IMR-90 (cell line): ENCODE measurements at regions of chr10 and their contacts with region 1.

Region 1: GRCh38 chr10:122342293-122343134 is 32.0 kb upstream of the PLEKHA1 start:
- DNase-seq: peak; percentile 51
- ATAC-seq: peak; percentile 89
- H3K4me3 ChIP-seq: no peak overlapping the region
- H3K27ac ChIP-seq: no peak overlapping the region
- H3K4me1 ChIP-seq: no peaks in the 10 kb centered on the region
- H3K27me3 ChIP-seq: peaks cover 10% of the 10 kb centered on the region; the same call in 1 of the 2 replicates
- CTCF ChIP-seq: peak; percentile 83
- POLR2A ChIP-seq: no peak
- RAD21 ChIP-seq: peak; percentile 74

Region 2: GRCh38 chr10:122221958-122222357 is 120.6 kb before region 1 on chr10:
- CTCF ChIA-PET with region 1: no interaction called
- POLR2A ChIA-PET with region 1: no interaction called
- dilution Hi-C with region 1: no loop called
- in situ Hi-C with region 1: no loop called
- intact Hi-C with region 1: no loop called
- DNase-seq: no peak
- ATAC-seq: no peak
- H3K4me3 ChIP-seq: no peak overlapping the region
- H3K27ac ChIP-seq: no peak overlapping the region
- H3K4me1 ChIP-seq: no peaks in the 10 kb centered on the region
- H3K27me3 ChIP-seq: no peaks in the 10 kb centered on the region
- CTCF ChIP-seq: no peak
- POLR2A ChIP-seq: no peak
- RAD21 ChIP-seq: no peak

Region 3: DNA sequence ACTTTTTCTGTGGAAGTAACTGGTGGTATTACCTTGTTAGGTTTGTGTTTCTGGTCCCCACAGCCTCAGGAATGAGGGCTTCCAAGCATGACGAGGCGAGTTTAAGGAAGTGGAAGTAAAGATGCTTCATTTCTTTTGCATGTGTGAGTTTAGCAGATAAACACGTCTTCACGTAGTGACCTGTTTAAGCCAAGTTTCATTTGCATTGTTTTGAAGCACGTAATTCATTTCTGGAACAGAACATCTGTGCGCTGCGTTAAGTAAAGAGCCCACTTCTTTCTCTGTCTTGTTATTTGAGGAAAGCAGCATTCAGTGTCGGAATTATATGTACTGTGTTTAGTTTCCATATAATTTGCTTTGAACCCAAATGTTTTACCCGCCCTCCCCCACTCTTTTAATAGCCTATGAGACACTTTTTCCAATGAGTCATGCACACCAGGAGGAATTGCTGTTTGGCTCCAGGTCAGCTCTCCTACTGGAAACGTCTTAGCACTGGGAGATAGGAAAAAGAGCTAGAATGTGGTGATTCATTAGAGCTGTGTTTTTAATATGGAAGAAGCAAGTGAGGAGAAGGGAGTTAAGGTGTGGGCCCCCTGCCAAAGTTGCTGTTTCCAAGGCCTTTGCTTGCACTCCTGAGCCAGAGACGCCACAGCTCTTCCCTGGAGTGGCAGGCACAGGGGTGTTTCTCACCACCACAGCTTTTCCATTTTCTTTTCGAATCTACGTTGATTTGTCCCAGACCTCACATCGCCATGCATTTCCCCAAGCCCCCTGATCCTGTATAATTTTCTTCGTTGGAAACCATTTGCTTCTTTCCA is 34.6 kb before region 1 on chr10:
- CTCF ChIA-PET with region 1: no interaction called
- POLR2A ChIA-PET with region 1: no interaction called
- dilution Hi-C with region 1: no loop called
- in situ Hi-C with region 1: no loop called
- intact Hi-C with region 1: loop called (anchors 5 kb)
- DNase-seq: peak; percentile 91
- ATAC-seq: peak; percentile 91
- H3K4me3 ChIP-seq: peak overlapping the region; percentile 28; the same call in 1 of the 2 replicates
- H3K27ac ChIP-seq: peak overlapping the region; percentile 35; the same call in 1 of the 2 replicates
- H3K4me1 ChIP-seq: peaks cover 8% of the 10 kb centered on the region
- H3K27me3 ChIP-seq: no peaks in the 10 kb centered on the region
- CTCF ChIP-seq: no peak
- POLR2A ChIP-seq: no peak
- RAD21 ChIP-seq: no peak

Region 4: GRCh38 chr10:122435212-122435827 is 92.8 kb after region 1 on chr10:
- CTCF ChIA-PET with region 1: interaction called, 16 read pairs
- POLR2A ChIA-PET with region 1: no interaction called
- dilution Hi-C with region 1: no loop called
- in situ Hi-C with region 1: loop called (anchors 5 kb)
- intact Hi-C with region 1: loop called (anchors 1 kb)
- DNase-seq: peak; percentile 55
- ATAC-seq: peak; percentile 46
- H3K4me3 ChIP-seq: no peak overlapping the region
- H3K27ac ChIP-seq: no peak overlapping the region
- H3K4me1 ChIP-seq: no peaks in the 10 kb centered on the region
- H3K27me3 ChIP-seq: no peaks in the 10 kb centered on the region
- CTCF ChIP-seq: peak; percentile 78
- POLR2A ChIP-seq: no peak
- RAD21 ChIP-seq: peak; percentile 85

Region 5: DNA sequence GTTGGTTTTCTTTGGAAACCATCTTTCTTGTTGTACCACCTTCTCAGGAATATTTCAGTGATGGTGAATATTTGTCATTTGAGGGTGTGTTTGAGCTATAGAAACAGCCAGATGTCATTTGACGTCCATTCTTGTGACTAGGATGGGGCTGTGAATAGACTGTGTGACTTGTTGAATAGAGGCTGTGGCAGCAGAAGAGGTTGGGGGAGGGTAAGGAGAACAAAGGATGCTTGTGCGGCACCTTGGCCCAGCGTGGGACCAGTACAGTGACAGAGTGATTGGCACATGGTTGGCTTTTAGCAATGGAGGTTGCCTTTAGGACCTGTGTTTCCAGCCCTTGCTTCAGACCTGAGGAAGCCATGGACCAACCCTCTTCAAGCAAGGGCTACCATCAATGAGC is 229.4 kb after region 1 on chr10:
- CTCF ChIA-PET with region 1: interaction called, 3 read pairs
- POLR2A ChIA-PET with region 1: no interaction called
- dilution Hi-C with region 1: no loop called
- in situ Hi-C with region 1: loop called (anchors 10 kb)
- intact Hi-C with region 1: no loop called
- DNase-seq: no peak
- ATAC-seq: no peak
- H3K4me3 ChIP-seq: no peak overlapping the region
- H3K27ac ChIP-seq: no peak overlapping the region
- H3K4me1 ChIP-seq: no peaks in the 10 kb centered on the region
- H3K27me3 ChIP-seq: no peaks in the 10 kb centered on the region; the same call in none of the 2 replicates
- CTCF ChIP-seq: no peak
- POLR2A ChIP-seq: no peak
- RAD21 ChIP-seq: no peak

Region 6: DNA sequence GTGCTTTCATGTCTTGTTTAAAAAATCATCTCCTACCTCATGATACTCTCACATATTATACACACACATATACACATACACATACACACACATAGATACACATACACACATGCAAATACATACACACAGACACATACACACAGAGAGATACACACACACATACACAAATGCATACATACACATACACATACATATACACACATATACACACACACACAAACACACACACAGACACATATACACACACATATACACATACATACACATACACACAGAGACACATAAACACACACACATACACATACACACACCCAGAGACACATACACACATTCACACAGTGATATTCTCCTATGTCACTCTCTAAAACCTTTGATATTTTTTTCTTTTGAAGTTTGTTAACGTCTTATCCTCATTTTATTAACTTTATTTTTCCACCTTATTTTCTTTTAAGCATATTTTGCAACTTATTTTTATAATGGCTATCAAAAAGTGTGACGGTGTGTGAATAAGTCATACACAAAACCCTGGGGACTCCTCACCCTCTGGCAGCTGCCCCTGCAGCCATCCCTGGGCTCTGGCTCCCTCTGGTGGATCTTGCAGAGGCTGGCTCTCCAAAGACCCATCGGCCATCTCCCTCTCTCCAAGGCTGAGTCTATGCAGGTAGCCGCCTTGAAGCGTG is 361.1 kb after region 1 on chr10:
- CTCF ChIA-PET with region 1: no interaction called
- POLR2A ChIA-PET with region 1: no interaction called
- dilution Hi-C with region 1: no loop called
- in situ Hi-C with region 1: no loop called
- intact Hi-C with region 1: loop called (anchors 5 kb)
- DNase-seq: peak; percentile 35
- ATAC-seq: peak; percentile 94
- H3K4me3 ChIP-seq: no peak overlapping the region
- H3K27ac ChIP-seq: no peak overlapping the region
- H3K4me1 ChIP-seq: no peaks in the 10 kb centered on the region
- H3K27me3 ChIP-seq: no peaks in the 10 kb centered on the region
- CTCF ChIP-seq: peak; percentile 70
- POLR2A ChIP-seq: no peak
- RAD21 ChIP-seq: peak; percentile 79

Region 7: DNA sequence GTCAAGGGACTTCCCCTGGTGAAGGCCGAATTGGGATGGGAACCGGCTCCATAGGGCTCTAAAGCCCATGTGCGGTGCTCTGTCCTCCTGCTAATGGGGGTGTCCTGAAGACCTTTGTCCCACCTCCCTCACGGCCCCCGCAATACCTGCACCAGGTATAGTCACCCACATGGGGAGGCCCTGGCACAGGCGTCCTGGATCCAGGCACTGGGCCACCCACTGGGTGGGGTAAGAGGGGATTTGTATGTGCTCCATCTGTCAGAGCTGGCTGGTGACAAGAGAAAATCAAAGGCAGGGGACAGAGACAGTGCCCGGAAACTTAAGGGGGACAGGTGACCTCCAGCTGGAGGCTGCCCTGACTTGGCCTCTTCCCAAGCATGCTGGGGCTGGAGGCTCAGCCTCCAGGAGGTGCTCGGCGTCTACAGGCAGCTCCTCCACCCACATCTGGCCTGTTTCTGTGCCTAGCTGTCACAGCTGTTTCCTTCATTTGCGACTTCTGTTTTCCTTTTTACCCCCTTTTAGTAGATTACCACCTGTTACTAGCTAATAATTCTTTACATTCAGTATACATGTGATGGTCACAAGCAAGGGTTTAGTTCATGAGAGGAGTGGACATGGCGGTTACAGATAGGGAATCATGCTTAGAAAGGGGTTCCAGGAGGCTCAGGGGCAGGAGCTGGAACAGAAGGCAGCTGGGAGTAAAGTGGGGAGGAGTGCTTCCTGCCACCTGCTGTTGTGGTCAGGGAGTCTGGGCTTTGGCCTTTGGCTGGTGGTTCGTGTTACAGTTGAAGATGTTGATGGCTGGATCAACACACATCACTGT is 505.5 kb after region 1 on chr10:
- CTCF ChIA-PET with region 1: no interaction called
- POLR2A ChIA-PET with region 1: no interaction called
- dilution Hi-C with region 1: no loop called
- in situ Hi-C with region 1: no loop called
- intact Hi-C with region 1: no loop called
- DNase-seq: peak; percentile 34
- ATAC-seq: no peak
- H3K4me3 ChIP-seq: no peak overlapping the region
- H3K27ac ChIP-seq: no peak overlapping the region
- H3K4me1 ChIP-seq: peaks cover 11% of the 10 kb centered on the region
- H3K27me3 ChIP-seq: no peaks in the 10 kb centered on the region
- CTCF ChIP-seq: no peak
- POLR2A ChIP-seq: no peak
- RAD21 ChIP-seq: no peak